CD8-positive, alpha-beta T cell (primary cell): ENCODE measurements at regions of chrX and their contacts with region 1.

Region 1: GRCh38 chrX:77899081-77899828 is at the start of gene COX7B:
- DNase-seq: peak; percentile 30 to 94 (median 58)
- ATAC-seq: peak; percentile 64
- H3K4me3 ChIP-seq: peak within 1 kb of the TSS; percentile 64 to 87
- H3K4me3 Mint-ChIP-seq: peak within 1 kb of the TSS; percentile 86
- H3K27ac ChIP-seq: peak within 1 kb of the TSS; percentile 88 to 94
- H3K27ac Mint-ChIP-seq: peak within 1 kb of the TSS; percentile 94
- H3K4me1 ChIP-seq: peaks cover 24% of the 10 kb centered on the region
- H3K4me1 Mint-ChIP-seq: peaks cover 26% of the 10 kb centered on the region
- H3K27me3 ChIP-seq: no peaks in the 10 kb centered on the region
- H3K27me3 Mint-ChIP-seq: no peaks in the 10 kb centered on the region
- CTCF ChIP-seq: peak; percentile 22
- total RNA-seq, gene COX7B: 127 to 134 TPM

Region 2: DNA sequence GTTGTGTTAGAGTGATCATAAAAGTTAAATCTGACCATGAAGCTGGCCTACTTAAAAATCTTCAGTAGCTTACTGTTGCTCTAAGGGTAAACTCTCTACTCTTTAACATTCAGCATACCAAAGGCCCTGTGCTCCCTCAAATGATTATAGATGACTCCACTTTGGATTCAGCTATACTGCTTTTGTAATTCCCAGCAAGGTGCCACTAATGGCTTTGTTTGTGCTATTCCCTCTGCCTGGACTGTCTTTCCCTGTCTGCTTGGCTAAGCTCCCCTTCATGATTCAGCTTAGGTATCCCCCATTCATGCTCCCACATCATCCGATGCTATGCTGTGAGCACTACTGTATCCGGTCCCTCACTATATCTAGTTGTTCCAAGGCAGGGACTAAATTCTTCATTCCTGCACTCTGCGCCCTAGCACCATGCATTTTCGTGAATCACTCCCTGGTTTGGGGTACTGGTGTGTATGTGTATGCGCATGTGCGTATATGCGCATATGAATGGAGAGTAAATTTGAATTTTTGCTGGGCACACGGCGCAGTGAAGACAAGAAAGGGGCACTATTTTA is 1726.8 kb before region 1 on chrX:
- CTCF ChIA-PET with region 1: no interaction called
- POLR2A ChIA-PET with region 1: no interaction called
- intact Hi-C with region 1: loop called in 1 of 2 experiments (anchors 10 kb)
- DNase-seq: no peak
- ATAC-seq: peak; percentile 51
- H3K4me3 ChIP-seq: peak overlapping the region; percentile 70 to 71
- H3K4me3 Mint-ChIP-seq: peak overlapping the region; percentile 94
- H3K27ac ChIP-seq: peak overlapping the region; percentile 81 to 90
- H3K27ac Mint-ChIP-seq: peak overlapping the region; percentile 98
- H3K4me1 ChIP-seq: peaks cover 32% of the 10 kb centered on the region
- H3K4me1 Mint-ChIP-seq: peaks cover 57% of the 10 kb centered on the region
- H3K27me3 ChIP-seq: no peaks in the 10 kb centered on the region
- H3K27me3 Mint-ChIP-seq: no peaks in the 10 kb centered on the region
- CTCF ChIP-seq: no peak

Region 3: DNA sequence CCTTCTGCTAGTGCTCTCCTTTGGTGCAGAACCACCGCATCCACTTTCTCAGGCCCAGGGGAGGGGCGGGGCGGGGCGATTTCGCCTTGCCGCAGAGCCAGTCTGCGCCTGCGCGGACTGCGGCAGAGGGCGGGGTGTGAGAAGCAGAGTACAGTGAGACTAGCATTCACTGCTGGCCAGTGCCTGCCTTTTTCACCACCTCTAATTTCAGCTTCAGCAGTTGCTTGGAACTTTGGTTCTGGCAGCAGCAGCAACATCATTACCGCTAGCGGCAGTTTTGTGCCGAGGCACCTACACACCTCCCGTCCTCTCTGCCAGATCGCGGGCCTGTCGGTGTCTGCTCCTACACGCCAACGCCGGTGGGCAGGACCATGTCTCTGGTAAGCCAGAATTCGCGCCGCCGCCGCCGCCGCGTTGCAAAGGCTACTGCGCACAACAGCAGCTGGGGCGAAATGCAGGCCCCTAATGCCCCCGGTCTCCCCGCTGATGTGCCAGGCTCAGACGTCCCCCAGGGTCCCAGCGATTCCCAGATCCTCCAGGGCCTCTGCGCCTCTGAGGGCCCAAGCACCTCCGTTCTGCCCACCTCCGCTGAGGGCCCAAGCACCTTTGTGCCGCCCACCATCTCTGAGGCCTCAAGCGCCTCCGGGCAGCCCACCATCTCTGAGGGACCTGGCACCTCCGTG is 1471.6 kb before region 1 on chrX and contains the start of gene MAGEE1:
- CTCF ChIA-PET with region 1: no interaction called
- POLR2A ChIA-PET with region 1: no interaction called
- intact Hi-C with region 1: loop called (anchors 5 kb)
- DNase-seq: peak; percentile 73 to 89 (median 80)
- ATAC-seq: peak; percentile 72
- H3K4me3 ChIP-seq: peak within 1 kb of the TSS; percentile 74 to 85
- H3K4me3 Mint-ChIP-seq: peak within 1 kb of the TSS; percentile 91
- H3K27ac ChIP-seq: peak within 1 kb of the TSS; percentile 80 to 89
- H3K27ac Mint-ChIP-seq: peak within 1 kb of the TSS; percentile 93
- H3K4me1 ChIP-seq: peaks cover 30% of the 10 kb centered on the region
- H3K4me1 Mint-ChIP-seq: peaks cover 37% of the 10 kb centered on the region
- H3K27me3 ChIP-seq: no peaks in the 10 kb centered on the region
- H3K27me3 Mint-ChIP-seq: no peaks in the 10 kb centered on the region
- CTCF ChIP-seq: no peak
- total RNA-seq, gene MAGEE1: 11.4 to 14.1 TPM

Region 4: GRCh38 chrX:77785486-77786364 is 113.5 kb before region 1 on chrX and contains the start of gene ATRX:
- CTCF ChIA-PET with region 1: no interaction called
- POLR2A ChIA-PET with region 1: interaction called, 4 read pairs
- intact Hi-C with region 1: loop called (anchors 1 to 2 kb)
- DNase-seq: peak; percentile 55 to 91 (median 73)
- ATAC-seq: peak; percentile 91
- H3K4me3 ChIP-seq: peak within 1 kb of the TSS; percentile 85 to 93
- H3K4me3 Mint-ChIP-seq: peak within 1 kb of the TSS; percentile 100
- H3K27ac ChIP-seq: peak within 1 kb of the TSS; percentile 92 to 93
- H3K27ac Mint-ChIP-seq: peak within 1 kb of the TSS; percentile 100
- H3K4me1 ChIP-seq: peaks cover 16% of the 10 kb centered on the region
- H3K4me1 Mint-ChIP-seq: peaks cover 38% of the 10 kb centered on the region
- H3K27me3 ChIP-seq: no peaks in the 10 kb centered on the region
- H3K27me3 Mint-ChIP-seq: no peaks in the 10 kb centered on the region
- CTCF ChIP-seq: no peak
- total RNA-seq, gene ATRX: 61.2 to 65.7 TPM

Region 5: GRCh38 chrX:78024349-78025108 is 125.3 kb after region 1 on chrX:
- CTCF ChIA-PET with region 1: interaction called, 14 read pairs
- POLR2A ChIA-PET with region 1: interaction called, 4 read pairs
- intact Hi-C with region 1: no loop called
- DNase-seq: peak in 6 of 9 experiments; percentile 11 to 67 (median 43)
- ATAC-seq: peak; percentile 88
- H3K4me3 ChIP-seq: no peak overlapping the region
- H3K4me3 Mint-ChIP-seq: no peak overlapping the region
- H3K27ac ChIP-seq: no peak overlapping the region
- H3K27ac Mint-ChIP-seq: no peak overlapping the region
- H3K4me1 ChIP-seq: no peaks in the 10 kb centered on the region
- H3K4me1 Mint-ChIP-seq: peaks cover 5% of the 10 kb centered on the region
- H3K27me3 ChIP-seq: no peaks in the 10 kb centered on the region
- H3K27me3 Mint-ChIP-seq: no peaks in the 10 kb centered on the region
- CTCF ChIP-seq: peak; percentile 47

Region 6: GRCh38 chrX:78103623-78104446 is 204.6 kb after region 1 on chrX and contains the start of gene PGK1:
- CTCF ChIA-PET with region 1: interaction called, 5 read pairs
- POLR2A ChIA-PET with region 1: interaction called, 11 read pairs
- intact Hi-C with region 1: loop called in 1 of 2 experiments (anchors 2 kb)
- DNase-seq: peak; percentile 85 to 97 (median 90)
- ATAC-seq: peak; percentile 93
- H3K4me3 ChIP-seq: peak within 1 kb of the TSS; percentile 95 to 99
- H3K4me3 Mint-ChIP-seq: peak within 1 kb of the TSS; percentile 94
- H3K27ac ChIP-seq: peak within 1 kb of the TSS; percentile 98
- H3K27ac Mint-ChIP-seq: peak within 1 kb of the TSS; percentile 96
- H3K4me1 ChIP-seq: peaks cover 47% of the 10 kb centered on the region
- H3K4me1 Mint-ChIP-seq: peaks cover 46% of the 10 kb centered on the region
- H3K27me3 ChIP-seq: no peaks in the 10 kb centered on the region
- H3K27me3 Mint-ChIP-seq: no peaks in the 10 kb centered on the region
- CTCF ChIP-seq: no peak
- total RNA-seq, gene PGK1: 364 to 374 TPM

Region 7: GRCh38 chrX:78517124-78517523 is 617.9 kb after region 1 on chrX:
- CTCF ChIA-PET with region 1: no interaction called
- POLR2A ChIA-PET with region 1: no interaction called
- intact Hi-C with region 1: loop called in 1 of 2 experiments (anchors 10 kb)
- DNase-seq: peak in 8 of 9 experiments; percentile 1 to 90 (median 43)
- ATAC-seq: peak; percentile 89
- H3K4me3 ChIP-seq: no peak overlapping the region
- H3K4me3 Mint-ChIP-seq: peak overlapping the region; percentile 16
- H3K27ac ChIP-seq: no peak overlapping the region
- H3K27ac Mint-ChIP-seq: peak overlapping the region; percentile 90
- H3K4me1 ChIP-seq: peaks cover 20% of the 10 kb centered on the region
- H3K4me1 Mint-ChIP-seq: peaks cover 33% of the 10 kb centered on the region
- H3K27me3 ChIP-seq: no peaks in the 10 kb centered on the region
- H3K27me3 Mint-ChIP-seq: no peaks in the 10 kb centered on the region
- CTCF ChIP-seq: no peak